ENCODE measurements at regions of chr19 and their contacts with region 1.

Region 1: DNA sequence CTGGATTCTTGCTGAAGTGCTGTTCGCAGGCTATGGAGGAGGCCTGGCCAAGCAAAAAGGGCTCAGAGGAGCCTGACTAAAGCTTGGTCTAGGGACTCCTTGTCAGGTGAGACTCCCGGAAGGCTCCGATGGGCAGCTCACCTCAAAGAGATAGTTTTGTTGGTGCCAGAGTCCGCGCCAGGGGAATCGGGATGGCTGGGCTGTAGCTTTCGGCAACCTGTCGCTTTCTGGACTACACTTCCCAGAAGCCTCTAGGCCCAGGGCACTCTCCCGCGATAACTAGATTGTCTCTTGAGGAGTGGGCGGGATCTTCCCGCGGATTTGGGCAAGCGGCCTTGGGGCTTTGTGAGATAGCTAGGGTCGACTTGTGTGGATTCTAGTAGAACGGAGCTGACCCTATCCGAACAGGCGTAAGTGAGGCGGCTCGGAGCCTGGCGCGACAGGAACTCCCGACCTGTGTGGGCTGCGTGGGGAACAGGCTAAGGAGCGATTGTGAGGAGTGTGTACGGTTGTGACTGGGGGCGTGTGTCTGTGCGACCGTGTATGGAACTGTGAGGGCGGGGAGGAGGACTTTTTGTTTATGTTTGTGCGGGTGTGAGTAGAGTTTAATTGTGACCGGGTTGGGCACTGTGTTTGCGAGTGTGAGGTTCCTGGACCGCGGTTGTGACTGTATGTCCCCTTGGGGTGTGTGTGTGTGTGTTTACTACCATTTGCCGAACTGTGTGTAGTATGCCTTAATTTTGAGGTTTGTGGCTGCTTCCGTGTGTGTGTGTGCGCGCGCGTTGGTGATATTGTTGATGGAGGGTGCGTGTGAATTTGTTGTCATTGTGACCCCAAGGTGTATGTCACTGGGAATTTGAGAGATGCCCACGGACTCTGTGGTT is at the start of gene ZNF345:
- DNase-seq: peak; percentile 80 to 95 (median 94)
- H3K4me3 ChIP-seq: peak within 1 kb of the TSS; percentile 63 to 99 (median 89)
- H3K27ac ChIP-seq: peak within 1 kb of the TSS; percentile 79 to 98 (median 94)
- H3K27me3 ChIP-seq: no peaks in the 10 kb centered on the region
- CTCF ChIP-seq: peak in 7 of 56 donors; percentile 5 to 17 (median 10)
- total RNA-seq, gene ZNF345: 4.2 to 23.2 (median 10.2) TPM

Region 2: DNA sequence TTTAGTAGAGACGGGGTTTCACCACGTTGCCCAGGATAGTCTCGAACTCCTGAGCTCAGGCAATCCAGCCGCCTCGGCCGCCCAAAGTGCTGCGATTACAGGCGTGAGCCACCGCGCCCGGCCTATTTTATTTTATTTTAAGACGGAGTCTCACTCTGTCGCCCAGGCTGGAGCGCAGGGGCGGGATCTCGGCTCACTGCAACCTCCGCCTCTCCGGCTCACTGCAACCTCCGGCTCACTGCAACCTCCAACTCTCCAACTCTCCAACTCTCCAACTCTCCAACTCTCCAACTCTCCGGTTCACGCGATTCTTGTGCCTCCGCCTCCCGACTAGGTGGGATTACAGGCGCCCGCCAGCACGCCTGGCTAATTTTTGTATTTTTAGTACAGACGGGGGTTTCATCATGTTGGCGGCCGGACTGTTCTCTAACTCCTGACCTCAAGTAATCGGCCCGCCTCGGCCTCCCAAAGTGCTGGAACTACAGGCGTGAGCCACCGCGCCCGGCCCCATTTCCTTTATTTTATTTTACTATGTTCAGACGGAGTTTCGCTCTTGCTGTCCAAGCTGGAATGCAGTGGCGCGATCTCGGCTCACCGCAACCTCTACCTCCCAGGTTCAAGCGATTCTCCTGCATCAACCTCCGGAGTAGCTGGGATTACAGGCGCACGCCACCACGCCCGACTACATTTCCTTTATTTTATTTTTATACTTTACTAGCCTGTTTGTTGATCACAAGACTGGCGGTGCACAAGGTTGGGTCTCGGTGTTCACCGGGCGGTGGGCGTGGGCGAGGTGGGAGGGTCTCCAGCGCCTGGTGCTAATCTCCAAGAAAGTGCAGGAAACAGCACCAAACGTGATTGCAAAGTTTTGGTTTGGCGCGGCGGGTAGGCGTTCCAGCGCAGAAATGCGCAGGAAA is 54.5 kb before region 1 on chr19:
- intact Hi-C with region 1: loop called in 1 of 2 experiments (anchors 2 kb)
- DNase-seq: no peak
- H3K4me3 ChIP-seq: peak overlapping the region; percentile 49 to 95 (median 80)
- H3K27ac ChIP-seq: peak overlapping the region in 36 of 59 donors; percentile 4 to 82 (median 69)
- H3K27me3 ChIP-seq: no peaks in the 10 kb centered on the region
- CTCF ChIP-seq: no peak

Region 3: DNA sequence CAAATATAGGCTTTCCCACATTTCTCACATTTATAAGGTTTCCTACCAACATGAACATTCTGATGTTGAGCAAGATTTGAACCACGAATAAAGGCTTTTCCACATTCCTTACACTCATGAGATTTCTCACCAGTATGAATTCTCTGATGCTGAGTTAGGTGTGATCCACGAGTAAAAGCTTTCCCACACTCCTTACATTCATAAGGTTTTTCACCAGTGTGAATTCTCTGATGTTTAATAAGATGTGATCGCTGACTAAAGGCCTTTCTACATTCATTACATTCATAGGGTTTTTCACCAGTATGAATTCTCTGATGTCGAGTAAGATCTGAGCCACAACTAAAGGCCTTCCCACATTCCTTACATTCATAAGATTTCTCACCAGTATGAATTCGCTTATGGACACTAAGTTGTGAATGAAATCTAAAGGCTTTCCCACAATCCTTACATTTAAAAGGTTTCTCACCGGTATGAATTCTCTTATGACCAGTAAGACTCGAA is 31.6 kb before region 1 on chr19:
- intact Hi-C with region 1: no loop called
- DNase-seq: no peak
- H3K4me3 ChIP-seq: no peak overlapping the region
- H3K27ac ChIP-seq: no peak overlapping the region
- H3K27me3 ChIP-seq: peaks cover 0 to 2% (median 0%) of the 10 kb centered on the region in 45 donors
- CTCF ChIP-seq: no peak

Region 4: GRCh38 chr19:36837906-36838783 is 12.7 kb before region 1 on chr19 and contains the start of gene ZNF790:
- intact Hi-C with region 1: loop called (anchors 1 to 2 kb)
- DNase-seq: peak; percentile 87 to 95 (median 93)
- H3K4me3 ChIP-seq: peak within 1 kb of the TSS; percentile 65 to 99 (median 82)
- H3K27ac ChIP-seq: peak within 1 kb of the TSS; percentile 79 to 99 (median 94)
- H3K27me3 ChIP-seq: no peaks in the 10 kb centered on the region
- CTCF ChIP-seq: peak in 7 of 56 donors; percentile 13 to 28 (median 17)
- total RNA-seq, gene ZNF790: 8.6 to 21.8 (median 12.8) TPM

Region 5: GRCh38 chr19:36898422-36898821 is 47.6 kb after region 1 on chr19:
- intact Hi-C with region 1: no loop called
- DNase-seq: no peak
- H3K4me3 ChIP-seq: no peak overlapping the region
- H3K27ac ChIP-seq: no peak overlapping the region
- H3K27me3 ChIP-seq: no peaks in the 10 kb centered on the region
- CTCF ChIP-seq: no peak

Region 6: DNA sequence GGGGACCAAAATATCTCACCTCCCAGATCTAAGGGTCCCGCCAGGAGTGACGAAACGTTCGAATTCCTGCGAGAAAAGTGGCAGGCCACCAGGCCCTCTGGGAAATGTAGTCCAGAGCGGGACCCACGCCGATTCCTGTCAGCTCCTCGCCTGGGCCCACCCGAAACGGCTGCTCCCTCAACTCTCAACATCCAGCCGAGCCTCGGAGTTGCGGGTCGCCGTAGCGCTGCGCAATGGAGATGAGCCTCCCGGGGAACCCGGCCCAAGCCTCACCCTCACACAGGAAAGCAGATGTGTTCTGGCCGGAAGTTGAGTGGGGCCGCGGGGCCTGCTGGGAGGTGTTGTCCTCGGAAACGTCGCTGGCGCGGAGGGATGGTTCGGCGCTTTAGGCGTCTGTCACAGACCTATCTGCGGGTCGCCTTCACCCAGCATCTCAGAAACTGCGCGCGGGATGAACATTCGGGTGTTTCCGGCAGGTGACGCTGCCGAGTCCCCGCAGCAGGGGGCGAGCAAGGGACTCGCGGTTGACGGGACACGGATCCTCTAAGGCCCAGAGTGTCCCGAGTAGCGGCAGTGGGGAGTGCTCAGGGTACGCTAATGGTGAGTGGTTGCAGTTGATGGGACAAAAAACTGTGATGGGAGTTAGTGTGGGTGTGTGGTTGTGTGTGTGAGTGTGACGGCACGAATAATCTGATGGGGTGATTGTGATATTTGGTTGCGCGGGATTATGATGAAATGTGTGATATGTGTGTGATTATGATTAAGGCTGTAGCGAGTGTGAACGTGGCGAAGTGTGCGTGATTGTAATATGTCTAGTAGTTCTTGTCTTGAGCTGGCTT is 65.4 kb after region 1 on chr19 and contains the starts of genes ZNF568 and ZNF829:
- intact Hi-C with region 1: loop called in 1 of 2 experiments (anchors 2 kb)
- DNase-seq: peak; percentile 83 to 94 (median 92)
- H3K4me3 ChIP-seq: peak within 1 kb of the TSS; percentile 59 to 98 (median 83)
- H3K27ac ChIP-seq: peak within 1 kb of the TSS; percentile 89 to 100 (median 97)
- H3K27me3 ChIP-seq: no peaks in the 10 kb centered on the region
- CTCF ChIP-seq: peak in 55 of 56 donors; percentile 23 to 77 (median 58)
- total RNA-seq, gene ZNF568: 17.6 to 31.2 (median 23.0) TPM
- total RNA-seq, gene ZNF829: 3.1 to 8.6 (median 4.9) TPM

Region 7: DNA sequence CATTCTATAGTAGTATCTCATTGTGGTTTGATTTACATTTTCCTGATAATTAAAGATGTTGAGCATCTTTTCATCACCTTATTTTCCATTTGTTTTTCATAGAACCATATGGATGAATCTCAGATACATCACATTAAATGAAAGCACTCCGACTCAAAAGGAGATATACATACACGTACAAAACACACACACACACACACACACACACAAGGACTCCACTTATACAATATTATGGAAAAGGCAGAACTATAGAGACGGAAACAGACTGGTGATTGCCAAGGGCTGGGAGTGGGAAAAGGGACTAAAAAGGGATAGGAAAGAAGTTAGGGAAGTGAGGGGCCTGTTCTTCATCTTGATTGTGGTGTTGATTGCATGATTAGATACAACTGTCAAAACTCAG is 297.4 kb after region 1 on chr19:
- intact Hi-C with region 1: no loop called
- DNase-seq: no peak
- H3K4me3 ChIP-seq: no peak overlapping the region
- H3K27ac ChIP-seq: no peak overlapping the region
- H3K27me3 ChIP-seq: peaks cover 0 to 3% (median 0%) of the 10 kb centered on the region in 45 donors
- CTCF ChIP-seq: no peak

Region 8: GRCh38 chr19:37172368-37173366 is 321.9 kb after region 1 on chr19 and contains the start of gene ZNF585A:
- intact Hi-C with region 1: loop called in 1 of 2 experiments (anchors 5 kb)
- DNase-seq: peak; percentile 85 to 98 (median 94)
- H3K4me3 ChIP-seq: peak within 1 kb of the TSS; percentile 39 to 95 (median 78)
- H3K27ac ChIP-seq: peak within 1 kb of the TSS in 54 of 59 donors; percentile 19 to 85 (median 68)
- H3K27me3 ChIP-seq: no peaks in the 10 kb centered on the region
- CTCF ChIP-seq: peak in 55 of 56 donors; percentile 18 to 76 (median 56)
- total RNA-seq, gene ZNF585A: 13.4 to 28.1 (median 20.6) TPM

Region 9: DNA sequence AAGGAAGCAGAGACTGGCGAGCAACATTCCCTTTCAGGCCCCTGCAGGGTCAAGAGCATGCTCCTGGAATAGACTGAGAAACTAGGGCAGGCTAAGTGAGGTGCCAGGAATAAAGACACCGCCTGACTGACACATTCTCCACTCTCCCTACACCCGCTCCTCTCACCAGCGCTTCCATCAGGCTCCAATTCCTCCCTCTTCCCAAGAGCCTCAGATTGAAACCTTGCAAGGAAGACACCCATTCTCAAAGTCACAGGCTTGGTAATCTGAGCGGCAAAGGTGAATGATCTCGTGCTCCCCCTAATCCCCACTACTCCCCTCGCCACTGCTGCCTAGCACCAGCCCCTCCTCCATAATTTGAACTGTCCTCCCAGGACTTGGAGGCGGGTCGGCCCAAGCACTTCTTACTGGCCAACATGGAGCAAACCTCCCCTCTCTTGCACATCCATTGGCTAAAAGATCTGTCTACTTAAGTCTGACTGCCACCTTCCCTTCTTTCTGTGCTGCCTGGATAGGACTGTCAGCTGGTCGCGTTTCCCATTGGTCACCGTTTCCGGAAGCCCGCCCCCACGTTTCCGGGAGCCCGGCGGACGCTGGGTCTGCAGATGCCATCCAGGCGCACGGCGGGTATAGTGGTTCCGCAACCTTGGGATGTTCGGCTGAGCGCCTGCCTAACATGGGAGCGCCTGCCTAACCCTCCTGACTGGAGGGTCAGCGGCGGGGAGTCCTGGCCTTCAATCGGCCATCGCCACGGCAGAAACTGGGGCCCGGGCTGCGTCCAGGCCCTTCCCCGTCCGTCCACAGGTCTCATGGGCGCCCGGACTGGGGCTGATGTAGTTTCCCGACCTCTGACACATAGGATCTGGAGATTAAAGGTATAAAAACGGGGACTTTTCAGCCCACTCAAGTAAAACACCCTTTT is 400.8 kb after region 1 on chr19:
- intact Hi-C with region 1: no loop called
- DNase-seq: peak; percentile 86 to 99 (median 96)
- H3K4me3 ChIP-seq: peak overlapping the region; percentile 60 to 99 (median 88)
- H3K27ac ChIP-seq: peak overlapping the region in 44 of 59 donors; percentile 12 to 86 (median 62)
- H3K27me3 ChIP-seq: no peaks in the 10 kb centered on the region
- CTCF ChIP-seq: peak in 8 of 56 donors; percentile 9 to 31 (median 23)

Measured in dorsolateral prefrontal cortex (tissue), 120 donors.